ENCODE measurements at regions of chr2 and their contacts with region 1.

Region 1: GRCh38 chr2:24538720-24539119 is 47.7 kb downstream of the NCOA1 start:
- DNase-seq: no peak
- H3K4me3 ChIP-seq: no peak overlapping the region
- H3K27ac ChIP-seq: no peak overlapping the region
- H3K4me1 ChIP-seq: no peaks in the 10 kb centered on the region
- H3K27me3 ChIP-seq: no peaks in the 10 kb centered on the region
- CTCF ChIP-seq: no peak

Region 2: GRCh38 chr2:23595601-23596251 is 943.0 kb before region 1 on chr2:
- CTCF ChIA-PET with region 1: no interaction called
- dilution Hi-C with region 1: no loop called
- in situ Hi-C with region 1: no loop called
- intact Hi-C with region 1: loop called (anchors 10 kb)
- DNase-seq: peak; percentile 19
- H3K4me3 ChIP-seq: no peak overlapping the region
- H3K27ac ChIP-seq: no peak overlapping the region
- H3K4me1 ChIP-seq: peaks cover 7% of the 10 kb centered on the region
- H3K27me3 ChIP-seq: no peaks in the 10 kb centered on the region
- CTCF ChIP-seq: no peak

Region 3: GRCh38 chr2:24702800-24703199 is 164.1 kb after region 1 on chr2:
- CTCF ChIA-PET with region 1: no interaction called
- dilution Hi-C with region 1: no loop called
- in situ Hi-C with region 1: no loop called
- intact Hi-C with region 1: no loop called
- DNase-seq: peak; percentile 83
- H3K4me3 ChIP-seq: no peak overlapping the region
- H3K27ac ChIP-seq: no peak overlapping the region
- H3K4me1 ChIP-seq: no peaks in the 10 kb centered on the region
- H3K27me3 ChIP-seq: no peaks in the 10 kb centered on the region
- CTCF ChIP-seq: no peak

Measured in mammary epithelial cell (primary cell).